ENCODE measurements at regions of chr2 and their contacts with region 1.

Region 1: GRCh38 chr2:191128172-191128910 is 22.5 kb downstream of the STAT4 start:
- DNase-seq: no peak
- ATAC-seq: peak; percentile 94
- H3K4me3 ChIP-seq: no peak overlapping the region
- H3K27ac ChIP-seq: no peak overlapping the region
- H3K4me1 ChIP-seq: no peaks in the 10 kb centered on the region
- H3K27me3 ChIP-seq: no peaks in the 10 kb centered on the region
- CTCF ChIP-seq: no peak
- EP300 ChIP-seq: no peak
- POLR2A ChIP-seq: no peak
- RAD21 ChIP-seq: no peak

Region 2: DNA sequence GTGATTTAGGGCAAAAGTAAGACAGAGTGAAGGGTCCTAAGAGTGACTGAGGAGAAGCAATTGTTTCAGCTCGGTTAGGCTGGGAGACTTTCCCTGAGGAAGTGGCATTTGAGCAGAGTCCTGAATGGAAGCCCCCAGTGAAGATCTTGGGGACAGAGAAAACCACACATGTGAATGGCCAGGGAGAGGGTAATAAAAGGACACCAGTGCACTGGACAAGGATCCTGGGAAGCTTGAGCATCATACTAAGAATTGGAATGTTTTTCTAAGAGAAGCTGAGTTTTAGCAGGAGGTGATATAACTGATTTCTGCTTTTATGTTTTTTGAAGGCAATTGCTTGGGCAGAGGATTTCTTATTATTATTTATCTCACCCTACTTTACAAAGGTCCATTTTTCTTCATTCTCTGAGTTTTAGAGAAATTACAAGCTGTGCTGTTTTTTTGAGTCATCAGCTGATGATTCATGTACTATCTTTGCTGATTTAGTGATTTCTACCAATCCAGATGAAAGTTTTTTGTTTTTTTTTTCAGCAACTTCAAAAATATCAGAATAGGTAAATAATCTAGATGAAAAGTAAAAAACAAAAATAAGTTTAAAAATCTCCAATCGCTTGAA is 676.7 kb before region 1 on chr2:
- CTCF ChIA-PET with region 1: no interaction called
- POLR2A ChIA-PET with region 1: interaction called, 10 read pairs
- RAD21 ChIA-PET with region 1: no interaction called
- SMC1A ChIA-PET with region 1: no interaction called
- in situ Hi-C with region 1: no loop called
- intact Hi-C with region 1: no loop called
- DNase-seq: no peak
- ATAC-seq: no peak
- H3K4me3 ChIP-seq: no peak overlapping the region
- H3K27ac ChIP-seq: no peak overlapping the region
- H3K4me1 ChIP-seq: peaks cover 7% of the 10 kb centered on the region
- H3K27me3 ChIP-seq: no peaks in the 10 kb centered on the region
- CTCF ChIP-seq: no peak
- EP300 ChIP-seq: no peak
- POLR2A ChIP-seq: no peak
- RAD21 ChIP-seq: no peak

Region 3: DNA sequence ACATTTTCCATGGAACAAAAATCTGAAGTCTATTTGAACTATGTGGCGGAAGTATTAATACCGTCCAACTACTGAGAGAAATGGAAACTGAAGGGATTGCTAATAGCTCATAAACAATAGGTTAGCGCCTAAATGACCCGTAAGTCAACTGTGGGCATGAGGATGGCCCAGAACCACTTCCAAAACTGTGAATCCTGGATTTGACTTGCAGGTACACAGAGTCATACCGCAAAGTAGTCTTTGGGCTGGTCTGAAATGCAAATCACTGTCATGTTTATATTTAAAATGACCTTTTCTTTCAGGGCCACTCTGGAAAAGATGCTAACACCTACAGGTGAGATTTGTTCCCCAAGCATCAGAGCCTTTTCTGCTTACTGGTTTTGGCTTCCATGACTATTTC is 28.1 kb before region 1 on chr2:
- CTCF ChIA-PET with region 1: no interaction called
- POLR2A ChIA-PET with region 1: no interaction called
- RAD21 ChIA-PET with region 1: no interaction called
- SMC1A ChIA-PET with region 1: no interaction called
- in situ Hi-C with region 1: no loop called
- intact Hi-C with region 1: no loop called
- DNase-seq: no peak
- ATAC-seq: no peak
- H3K4me3 ChIP-seq: no peak overlapping the region
- H3K27ac ChIP-seq: no peak overlapping the region
- H3K4me1 ChIP-seq: no peaks in the 10 kb centered on the region
- H3K27me3 ChIP-seq: no peaks in the 10 kb centered on the region; a peak in 1 of 4 replicates
- CTCF ChIP-seq: no peak
- EP300 ChIP-seq: no peak
- POLR2A ChIP-seq: no peak
- RAD21 ChIP-seq: no peak

Region 4: GRCh38 chr2:191114403-191114886 is 13.9 kb before region 1 on chr2:
- CTCF ChIA-PET with region 1: no interaction called
- POLR2A ChIA-PET with region 1: interaction called, 4 read pairs
- RAD21 ChIA-PET with region 1: interaction called, 11 read pairs
- SMC1A ChIA-PET with region 1: interaction called, 19 read pairs
- in situ Hi-C with region 1: no loop called
- intact Hi-C with region 1: no loop called
- DNase-seq: peak; percentile 55
- ATAC-seq: peak; percentile 79
- H3K4me3 ChIP-seq: 0 out of 2 replicates have a peak overlapping the region, but pooled peaks have one; percentile 19
- H3K27ac ChIP-seq: peak overlapping the region; percentile 38; the same call in 1 of the 2 replicates
- H3K4me1 ChIP-seq: peaks cover 35% of the 10 kb centered on the region
- H3K27me3 ChIP-seq: no peaks in the 10 kb centered on the region
- CTCF ChIP-seq: no peak
- EP300 ChIP-seq: peak in 1 of 2 experiments; percentile 46; a peak in 1 of 4 replicates
- POLR2A ChIP-seq: no peak
- RAD21 ChIP-seq: no peak

Region 5: DNA sequence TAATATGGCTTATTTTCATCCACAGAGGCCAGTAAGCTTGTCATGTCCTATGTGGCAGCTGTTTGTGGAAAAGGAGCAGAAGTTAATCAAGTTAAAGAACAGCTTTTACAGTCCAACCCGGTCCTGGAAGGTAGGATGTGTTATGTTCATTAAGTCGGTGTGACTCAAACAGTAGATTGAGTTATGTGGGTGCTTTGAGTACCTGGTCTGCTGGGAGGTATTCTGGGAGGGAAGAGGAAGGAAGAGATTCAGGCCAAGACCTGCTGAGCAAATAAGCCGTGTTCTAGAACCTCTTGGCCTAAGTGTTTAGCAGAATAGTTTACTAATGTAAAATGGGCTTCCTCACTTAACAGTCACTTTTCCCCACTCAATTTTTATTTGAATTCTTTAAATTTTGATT is 213.1 kb after region 1 on chr2:
- CTCF ChIA-PET with region 1: no interaction called
- POLR2A ChIA-PET with region 1: no interaction called
- RAD21 ChIA-PET with region 1: no interaction called
- SMC1A ChIA-PET with region 1: no interaction called
- in situ Hi-C with region 1: no loop called
- intact Hi-C with region 1: no loop called
- DNase-seq: no peak
- ATAC-seq: no peak
- H3K4me3 ChIP-seq: no peak overlapping the region
- H3K27ac ChIP-seq: no peak overlapping the region
- H3K4me1 ChIP-seq: no peaks in the 10 kb centered on the region
- H3K27me3 ChIP-seq: no peaks in the 10 kb centered on the region; a peak in 1 of 4 replicates
- CTCF ChIP-seq: no peak
- EP300 ChIP-seq: no peak
- POLR2A ChIP-seq: no peak
- RAD21 ChIP-seq: no peak